ENCODE measurements at regions of chr21 and their contacts with region 1.

Region 1: DNA sequence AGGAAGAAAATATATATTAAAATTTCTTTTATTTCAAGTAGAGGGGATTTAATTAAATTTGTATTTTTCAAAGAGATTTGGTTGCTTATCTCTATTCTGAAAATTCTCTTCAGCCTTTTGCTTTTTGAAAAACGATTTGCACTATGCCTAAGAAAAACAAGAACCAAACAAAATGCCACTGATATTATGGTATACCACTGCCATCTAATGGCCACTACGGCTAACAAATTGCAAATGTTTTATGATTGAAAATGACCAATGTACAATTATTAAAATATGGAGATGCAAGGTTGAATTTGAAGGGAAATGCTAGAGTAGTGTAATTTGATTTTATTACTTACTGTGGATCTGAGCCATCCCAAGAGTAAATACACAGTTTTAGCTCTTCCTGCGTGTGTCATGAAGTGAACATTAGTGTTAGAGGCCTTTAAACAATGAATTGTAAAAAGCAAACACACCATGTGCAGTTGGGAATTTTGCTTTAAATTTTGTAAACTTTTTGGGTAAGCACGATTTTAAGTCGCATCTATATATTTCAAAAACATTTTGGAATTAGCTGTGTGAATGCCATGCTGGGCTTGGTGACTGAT is 137.4 kb upstream of the USP25 start:
- DNase-seq: peak in 1 of 2 donors; percentile 68
- ATAC-seq: peak in 1 of 3 donors; percentile 57
- H3K4me3 ChIP-seq: no peak overlapping the region
- H3K4me3 Mint-ChIP-seq: no peak overlapping the region
- H3K27ac ChIP-seq: no peak overlapping the region
- H3K27ac Mint-ChIP-seq: no peak overlapping the region
- H3K4me1 ChIP-seq: no peaks in the 10 kb centered on the region
- H3K4me1 Mint-ChIP-seq: no peaks in the 10 kb centered on the region
- H3K27me3 ChIP-seq: no peaks in the 10 kb centered on the region
- H3K27me3 Mint-ChIP-seq: peaks cover 0 to 27% of the 10 kb centered on the region in 2 donors
- CTCF ChIP-seq: peak; percentile 78

Region 2: GRCh38 chr21:14251336-14251735 is 1341.0 kb before region 1 on chr21:
- intact Hi-C with region 1: loop called (anchors 1 kb)
- DNase-seq: no peak
- ATAC-seq: no peak
- H3K4me3 ChIP-seq: no peak overlapping the region
- H3K4me3 Mint-ChIP-seq: no peak overlapping the region
- H3K27ac ChIP-seq: no peak overlapping the region
- H3K27ac Mint-ChIP-seq: no peak overlapping the region
- H3K4me1 ChIP-seq: no peaks in the 10 kb centered on the region
- H3K4me1 Mint-ChIP-seq: peaks cover 6% of the 10 kb centered on the region in 2 donors
- H3K27me3 ChIP-seq: peaks cover 5% of the 10 kb centered on the region
- H3K27me3 Mint-ChIP-seq: peaks cover 5 to 6% of the 10 kb centered on the region in 2 donors
- CTCF ChIP-seq: no peak

Region 3: DNA sequence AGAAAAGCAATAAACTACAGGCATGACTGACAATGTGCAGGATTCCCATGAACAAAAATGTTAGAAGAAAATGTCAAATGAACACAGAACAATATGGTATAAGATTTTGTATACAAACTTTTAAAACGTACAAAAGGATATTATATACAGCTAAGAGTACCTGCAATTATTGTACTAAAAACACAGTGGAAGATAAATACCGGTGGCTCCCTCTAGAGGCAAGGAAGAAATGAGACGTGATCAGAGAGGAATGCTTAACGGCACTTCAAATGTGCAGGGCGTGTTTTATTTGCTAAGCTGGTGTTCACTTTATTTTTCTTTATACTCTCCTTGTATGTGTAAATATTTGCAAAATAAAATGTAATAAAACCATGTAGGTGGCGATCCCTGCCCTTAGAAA is 854.4 kb before region 1 on chr21:
- intact Hi-C with region 1: loop called (anchors 5 kb)
- DNase-seq: peak in 1 of 2 donors; percentile 87
- ATAC-seq: peak; percentile 83 to 86 (median 83)
- H3K4me3 ChIP-seq: no peak overlapping the region
- H3K4me3 Mint-ChIP-seq: no peak overlapping the region
- H3K27ac ChIP-seq: no peak overlapping the region
- H3K27ac Mint-ChIP-seq: no peak overlapping the region
- H3K4me1 ChIP-seq: no peaks in the 10 kb centered on the region
- H3K4me1 Mint-ChIP-seq: peaks cover 0 to 4% of the 10 kb centered on the region in 2 donors
- H3K27me3 ChIP-seq: no peaks in the 10 kb centered on the region
- H3K27me3 Mint-ChIP-seq: no peaks in the 10 kb centered on the region
- CTCF ChIP-seq: peak; percentile 87

Region 4: GRCh38 chr21:15495965-15496364 is 96.4 kb before region 1 on chr21:
- intact Hi-C with region 1: no loop called
- DNase-seq: no peak
- ATAC-seq: no peak
- H3K4me3 ChIP-seq: no peak overlapping the region
- H3K4me3 Mint-ChIP-seq: no peak overlapping the region
- H3K27ac ChIP-seq: no peak overlapping the region
- H3K27ac Mint-ChIP-seq: no peak overlapping the region
- H3K4me1 ChIP-seq: peaks cover 3% of the 10 kb centered on the region
- H3K4me1 Mint-ChIP-seq: no peaks in the 10 kb centered on the region
- H3K27me3 ChIP-seq: no peaks in the 10 kb centered on the region
- H3K27me3 Mint-ChIP-seq: peaks cover 0 to 4% of the 10 kb centered on the region in 2 donors
- CTCF ChIP-seq: no peak

Region 5: GRCh38 chr21:15508554-15508953 is 83.8 kb before region 1 on chr21:
- intact Hi-C with region 1: no loop called
- DNase-seq: peak in 1 of 2 donors; percentile 17
- ATAC-seq: peak; percentile 90 to 96 (median 91)
- H3K4me3 ChIP-seq: no peak overlapping the region
- H3K4me3 Mint-ChIP-seq: no peak overlapping the region
- H3K27ac ChIP-seq: peak overlapping the region; percentile 59
- H3K27ac Mint-ChIP-seq: no peak overlapping the region
- H3K4me1 ChIP-seq: peaks cover 7% of the 10 kb centered on the region
- H3K4me1 Mint-ChIP-seq: peaks cover 1 to 6% of the 10 kb centered on the region in 2 donors
- H3K27me3 ChIP-seq: no peaks in the 10 kb centered on the region
- H3K27me3 Mint-ChIP-seq: no peaks in the 10 kb centered on the region
- CTCF ChIP-seq: no peak

Measured in natural killer cell (primary cell).